GM13977 (cell line): ENCODE measurements at regions of chr1 and their contacts with region 1.

Region 1: DNA sequence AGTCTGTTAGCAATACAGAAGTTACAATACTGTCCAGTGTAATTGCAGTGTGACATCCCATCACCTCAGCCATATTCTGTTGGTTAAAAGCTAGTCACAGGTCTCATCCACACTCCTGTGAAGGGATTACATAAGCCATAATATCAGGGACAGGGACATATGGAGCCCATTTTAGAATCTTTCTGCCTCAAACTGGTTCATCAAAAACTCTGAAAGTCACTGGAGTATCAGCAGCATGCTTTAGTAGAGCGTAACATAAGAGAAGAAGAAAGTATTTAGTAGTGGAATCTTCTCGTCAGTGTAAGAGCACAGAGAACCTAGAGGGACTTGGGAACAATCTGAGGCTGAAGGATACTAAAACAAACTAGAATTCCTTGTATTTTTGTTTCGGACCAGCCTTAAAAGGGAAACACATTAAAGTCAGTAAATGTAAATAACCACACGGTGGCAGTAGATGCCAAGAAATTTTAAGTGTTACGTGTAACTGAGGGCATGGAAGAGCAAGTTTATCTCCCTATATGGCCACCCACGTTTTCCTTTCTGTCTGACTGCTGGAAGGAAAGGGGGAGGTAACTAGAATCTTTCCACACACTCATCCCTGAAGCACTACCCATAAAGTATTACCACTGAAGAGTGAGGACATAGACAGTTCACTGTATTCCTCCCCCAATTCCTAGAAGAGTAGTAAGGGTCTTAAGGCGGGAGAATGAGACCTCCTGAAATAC is 41.6 kb upstream of the AGL start:
- DNase-seq: peak; percentile 62
- CTCF ChIP-seq: peak; percentile 57

Region 2: DNA sequence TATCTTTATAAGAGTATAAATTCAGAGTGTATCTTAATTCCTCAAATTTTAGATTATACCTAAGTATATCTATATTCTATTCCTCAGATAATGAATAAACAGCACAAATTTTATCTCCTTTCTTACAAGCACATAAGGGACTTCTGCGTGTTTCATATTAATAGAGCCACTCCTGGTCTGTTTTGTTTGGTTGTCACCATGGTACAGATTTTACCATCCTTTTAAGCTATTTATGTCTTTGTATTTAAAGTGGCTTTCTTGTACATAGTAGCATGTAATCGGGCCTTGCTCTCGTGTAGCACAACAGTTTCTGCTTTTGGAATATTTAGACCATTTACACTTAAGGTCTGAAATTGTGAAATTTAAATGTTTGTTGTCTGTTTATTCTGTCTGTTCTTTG is 108.7 kb after region 1 on chr1:
- in situ Hi-C with region 1: no loop called
- DNase-seq: no peak
- CTCF ChIP-seq: no peak

Region 3: GRCh38 chr1:100459358-100460114 is 651.0 kb after region 1 on chr1:
- in situ Hi-C with region 1: loop called (anchors 10 kb)
- DNase-seq: peak; percentile 45
- CTCF ChIP-seq: peak; percentile 93

Region 4: DNA sequence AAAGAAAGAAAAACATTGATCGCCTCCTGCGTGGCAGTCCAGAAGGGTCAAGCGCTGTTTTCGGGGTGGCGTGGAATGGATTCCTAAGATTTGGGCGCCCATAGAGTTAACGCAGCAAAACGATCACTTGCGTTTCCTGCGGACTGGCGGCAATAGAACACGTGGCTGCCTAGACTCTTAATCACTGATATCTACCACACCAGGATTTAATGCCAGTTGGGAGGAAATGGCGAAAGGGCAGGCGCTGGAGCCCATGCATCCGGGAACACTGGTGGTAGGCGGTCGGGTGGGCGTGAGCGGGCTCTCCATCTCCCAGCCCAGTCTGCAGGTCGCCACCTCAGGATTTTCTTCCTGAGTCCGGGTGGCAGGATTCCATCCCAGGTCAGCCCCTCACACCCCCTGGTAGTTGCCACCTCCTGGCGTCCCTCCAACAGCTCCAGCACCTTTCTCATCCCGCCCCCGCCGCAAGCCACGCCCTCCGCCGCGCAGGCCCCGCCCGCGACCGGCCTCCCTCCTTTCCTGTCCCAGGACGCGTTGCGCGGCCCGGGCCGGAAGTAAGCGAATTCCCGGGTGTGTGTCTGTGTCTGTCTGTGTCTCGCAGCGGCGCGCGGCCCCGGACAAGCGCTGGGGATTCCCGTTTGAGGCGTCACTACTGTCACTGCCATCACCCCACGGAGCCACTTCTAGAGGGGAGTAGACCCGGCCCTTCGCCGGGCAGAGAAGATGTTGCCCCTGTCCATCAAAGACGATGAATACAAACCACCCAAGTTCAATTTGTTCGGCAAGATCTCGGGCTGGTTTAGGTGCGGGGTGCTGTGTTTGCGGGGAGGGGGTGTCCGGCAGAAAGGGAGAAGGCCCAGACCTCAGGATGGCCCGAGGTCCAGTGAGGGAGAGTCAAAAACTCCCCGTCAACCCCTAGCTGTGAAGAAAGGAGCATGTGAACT is 1087.3 kb after region 1 on chr1 and contains the start of gene SLC30A7:
- in situ Hi-C with region 1: loop called (anchors 25 kb)
- DNase-seq: peak; percentile 82
- CTCF ChIP-seq: no peak